ENCODE measurements at regions of chr11 and their contacts with region 1.

Region 1: GRCh38 chr11:2532704-2533586 is 88.1 kb downstream of the KCNQ1 start:
- DNase-seq: peak; percentile 81 to 95 (median 92)
- ATAC-seq: peak; percentile 88 to 90
- H3K4me3 Mint-ChIP-seq: peak overlapping the region; percentile 58 to 90 (median 78)
- H3K27ac Mint-ChIP-seq: peak overlapping the region in 7 of 10 donors; percentile 25 to 87 (median 80)
- H3K4me1 Mint-ChIP-seq: peaks cover 13 to 35% (median 27%) of the 10 kb centered on the region in 4 donors
- H3K27me3 Mint-ChIP-seq: no peaks in the 10 kb centered on the region

Region 2: GRCh38 chr11:2885676-2886081 is 352.7 kb after region 1 on chr11 and contains the start of gene CDKN1C:
- POLR2A ChIA-PET with region 1: interaction called, 57 read pairs
- DNase-seq: peak; percentile 71 to 91 (median 84)
- ATAC-seq: peak; percentile 86 to 91
- H3K4me3 Mint-ChIP-seq: peak within 1 kb of the TSS; percentile 82 to 94 (median 90)
- H3K27ac Mint-ChIP-seq: peak within 1 kb of the TSS in 9 of 10 donors; percentile 30 to 92 (median 74)
- H3K4me1 Mint-ChIP-seq: peaks cover 15 to 26% (median 20%) of the 10 kb centered on the region in 4 donors
- H3K27me3 Mint-ChIP-seq: peaks cover 0 to 2% (median 0%) of the 10 kb centered on the region in 5 donors
- polyA plus RNA-seq, gene CDKN1C: 0.27 to 0.34 TPM in 2 of 3 donors, not detected in the other

Measured in naive thymus-derived CD8-positive, alpha-beta T cell (primary cell).